Ovary (tissue), 10 donors: ENCODE measurements at regions of chr10 and their contacts with region 1.

Region 1: GRCh38 chr10:10421071-10421470 is 596.6 kb upstream of the CELF2 start:
- DNase-seq: no peak
- H3K4me3 ChIP-seq: no peak overlapping the region
- H3K27ac ChIP-seq: no peak overlapping the region
- H3K4me1 ChIP-seq: no peaks in the 10 kb centered on the region
- H3K27me3 ChIP-seq: no peaks in the 10 kb centered on the region
- CTCF ChIP-seq: no peak
- EP300 ChIP-seq: no peak
- POLR2A ChIP-seq: no peak

Region 2: DNA sequence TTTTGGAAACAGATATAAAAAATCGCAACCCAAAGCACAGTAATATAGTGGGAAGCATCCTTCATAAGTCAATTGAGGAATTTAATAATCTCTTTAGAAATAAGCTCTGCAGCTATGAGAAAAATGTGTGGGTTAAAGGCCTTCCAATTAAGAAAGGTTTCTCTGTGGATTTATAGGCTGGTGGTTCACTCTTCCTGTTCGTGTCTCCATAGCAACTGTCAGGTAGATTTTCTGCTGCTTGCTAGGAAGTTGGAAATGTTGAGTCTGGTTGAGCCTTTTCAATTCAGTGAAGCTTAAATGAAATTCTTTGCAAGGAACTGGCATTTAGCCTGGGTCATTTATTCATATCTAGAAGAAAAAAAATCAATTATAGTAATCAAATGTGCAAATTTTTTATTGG is 56.2 kb before region 1 on chr10:
- intact Hi-C with region 1: no loop called
- DNase-seq: no peak
- H3K4me3 ChIP-seq: no peak overlapping the region
- H3K27ac ChIP-seq: no peak overlapping the region
- H3K4me1 ChIP-seq: no peaks in the 10 kb centered on the region
- H3K27me3 ChIP-seq: no peaks in the 10 kb centered on the region
- CTCF ChIP-seq: no peak
- EP300 ChIP-seq: no peak
- POLR2A ChIP-seq: no peak

Region 3: GRCh38 chr10:10438335-10439100 is 17.4 kb after region 1 on chr10:
- intact Hi-C with region 1: loop called in 1 of 4 experiments (anchors 2 kb)
- DNase-seq: no peak
- H3K4me3 ChIP-seq: no peak overlapping the region
- H3K27ac ChIP-seq: no peak overlapping the region
- H3K4me1 ChIP-seq: no peaks in the 10 kb centered on the region
- H3K27me3 ChIP-seq: no peaks in the 10 kb centered on the region
- CTCF ChIP-seq: no peak
- EP300 ChIP-seq: no peak
- POLR2A ChIP-seq: no peak